ENCODE measurements at regions of chr18 and their contacts with region 1.

Region 1: GRCh38 chr18:45974088-45974536 is 7.0 kb upstream of the EPG5 start:
- DNase-seq: peak; percentile 83
- H3K4me3 Mint-ChIP-seq: no peak overlapping the region
- H3K27ac Mint-ChIP-seq: peak overlapping the region; percentile 78
- H3K4me1 Mint-ChIP-seq: peaks cover 5% of the 10 kb centered on the region
- H3K27me3 Mint-ChIP-seq: no peaks in the 10 kb centered on the region

Region 2: DNA sequence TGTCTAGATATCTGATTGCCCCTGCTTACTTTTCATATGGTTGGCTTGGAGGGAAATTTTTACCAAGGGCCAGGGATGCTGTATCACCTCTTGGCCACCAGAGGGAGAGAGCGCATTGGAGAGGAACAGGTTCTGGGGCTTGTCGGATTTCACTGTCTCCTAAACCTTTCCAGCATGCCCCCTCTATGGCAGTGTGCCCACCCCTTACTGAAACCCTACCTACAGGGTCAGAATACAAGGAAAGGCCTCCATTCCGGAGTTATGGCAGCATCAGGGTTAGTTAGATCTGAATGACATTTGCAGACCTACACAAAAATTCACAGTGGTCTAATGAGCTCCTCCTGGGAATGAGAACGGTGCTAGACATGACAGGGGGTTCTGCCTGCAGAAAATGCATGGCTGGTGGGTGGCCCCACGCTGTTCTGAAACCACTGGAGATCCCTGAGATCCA is 353.0 kb before region 1 on chr18:
- CTCF ChIA-PET with region 1: interaction called, 3 read pairs
- POLR2A ChIA-PET with region 1: no interaction called
- intact Hi-C with region 1: loop called (anchors 2 kb)
- DNase-seq: peak; percentile 44
- H3K4me3 Mint-ChIP-seq: no peak overlapping the region
- H3K27ac Mint-ChIP-seq: no peak overlapping the region
- H3K4me1 Mint-ChIP-seq: no peaks in the 10 kb centered on the region
- H3K27me3 Mint-ChIP-seq: peaks cover 6% of the 10 kb centered on the region

Region 3: GRCh38 chr18:45722899-45723298 is 251.2 kb before region 1 on chr18:
- CTCF ChIA-PET with region 1: interaction called, 5 read pairs
- POLR2A ChIA-PET with region 1: no interaction called
- intact Hi-C with region 1: loop called (anchors 1 kb)
- DNase-seq: peak; percentile 85
- H3K4me3 Mint-ChIP-seq: no peak overlapping the region
- H3K27ac Mint-ChIP-seq: no peak overlapping the region
- H3K4me1 Mint-ChIP-seq: no peaks in the 10 kb centered on the region
- H3K27me3 Mint-ChIP-seq: no peaks in the 10 kb centered on the region

Region 4: GRCh38 chr18:45764000-45764686 is 210.0 kb before region 1 on chr18:
- CTCF ChIA-PET with region 1: no interaction called
- POLR2A ChIA-PET with region 1: no interaction called
- intact Hi-C with region 1: no loop called
- DNase-seq: no peak
- H3K4me3 Mint-ChIP-seq: no peak overlapping the region
- H3K27ac Mint-ChIP-seq: no peak overlapping the region
- H3K4me1 Mint-ChIP-seq: no peaks in the 10 kb centered on the region
- H3K27me3 Mint-ChIP-seq: peaks cover 8% of the 10 kb centered on the region

Region 5: DNA sequence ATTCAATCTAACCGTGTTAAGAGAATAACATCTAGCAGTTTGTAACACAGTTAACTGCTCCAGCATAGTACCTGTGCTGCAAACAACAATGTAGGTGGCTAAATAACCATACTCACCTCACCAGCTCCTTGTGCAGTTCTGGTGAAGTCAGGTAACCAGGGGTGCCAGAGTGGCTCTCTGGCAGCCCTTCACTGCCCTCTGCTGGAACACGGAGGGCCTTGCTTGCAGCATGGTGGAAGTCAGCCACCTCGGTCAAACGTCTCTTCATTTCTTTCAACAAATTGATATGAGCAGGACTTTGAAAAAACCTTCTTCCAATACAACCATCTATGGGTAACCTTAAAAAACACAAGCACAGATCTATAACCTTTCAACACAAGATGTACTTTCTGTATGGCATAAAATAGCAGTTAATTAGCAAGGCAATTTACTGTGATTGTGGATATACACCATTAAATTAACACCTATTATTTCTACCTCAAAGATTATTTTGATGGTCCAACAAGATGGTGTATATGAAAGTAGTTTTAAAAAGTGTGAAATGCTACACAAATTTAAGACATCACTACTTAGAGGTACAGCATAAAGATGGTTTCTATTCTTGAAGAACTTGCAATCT is 63.6 kb before region 1 on chr18:
- CTCF ChIA-PET with region 1: interaction called, 6 read pairs
- POLR2A ChIA-PET with region 1: no interaction called
- intact Hi-C with region 1: loop called (anchors 1 kb)
- DNase-seq: peak; percentile 72
- H3K4me3 Mint-ChIP-seq: no peak overlapping the region
- H3K27ac Mint-ChIP-seq: no peak overlapping the region
- H3K4me1 Mint-ChIP-seq: no peaks in the 10 kb centered on the region
- H3K27me3 Mint-ChIP-seq: no peaks in the 10 kb centered on the region

Measured in activated CD4-positive, alpha-beta memory T cell treated with anti-CD3 and anti-CD28 coated beads for 36 hours (primary cell).